Ascending aorta (tissue), 2 donors: ENCODE measurements at regions of chr1 and their contacts with region 1.

Region 1: DNA sequence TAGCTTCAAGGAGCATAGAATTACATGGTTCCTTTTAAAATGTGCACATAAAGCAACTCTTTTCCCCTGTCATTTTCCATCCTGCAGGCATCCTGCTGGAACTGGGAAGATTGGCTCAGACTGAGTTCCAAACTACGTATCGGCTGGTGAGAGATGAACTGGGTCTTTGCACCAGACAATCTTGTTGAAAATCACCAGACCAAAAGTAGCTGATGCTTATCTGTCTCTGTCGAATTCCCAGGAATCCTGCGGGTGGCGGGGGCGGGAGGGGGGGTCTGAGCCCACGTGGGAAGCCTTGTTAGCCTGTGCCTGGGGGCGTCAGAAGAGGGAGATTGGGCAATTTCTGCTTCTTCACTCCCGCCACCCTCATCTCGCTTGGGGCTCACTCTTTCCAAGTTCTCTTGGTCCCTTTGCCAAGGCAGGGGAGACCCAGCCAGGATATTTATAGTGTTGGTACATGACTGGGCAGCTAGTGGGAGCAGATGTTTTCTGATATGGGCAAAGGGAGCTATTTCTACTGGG is 90.1 kb upstream of the SLC25A33 start:
- DNase-seq: peak in 1 of 2 donors; percentile 92
- H3K4me3 ChIP-seq: peak overlapping the region in 1 of 2 donors; percentile 36
- H3K27ac ChIP-seq: peak overlapping the region; percentile 74 to 81
- H3K4me1 ChIP-seq: peaks cover 12 to 25% of the 10 kb centered on the region in 2 donors
- H3K27me3 ChIP-seq: no peaks in the 10 kb centered on the region
- CTCF ChIP-seq: no peak

Region 2: GRCh38 chr1:9399510-9400424 is 49.4 kb before region 1 on chr1:
- intact Hi-C with region 1: loop called (anchors 2 kb)
- DNase-seq: peak in 1 of 2 donors; percentile 82
- H3K4me3 ChIP-seq: no peak overlapping the region
- H3K27ac ChIP-seq: peak overlapping the region; percentile 87 to 93
- H3K4me1 ChIP-seq: peaks cover 34 to 55% of the 10 kb centered on the region in 2 donors
- H3K27me3 ChIP-seq: no peaks in the 10 kb centered on the region
- CTCF ChIP-seq: no peak

Region 3: GRCh38 chr1:9518454-9518998 is 69.4 kb after region 1 on chr1:
- intact Hi-C with region 1: no loop called
- DNase-seq: no peak
- H3K4me3 ChIP-seq: no peak overlapping the region
- H3K27ac ChIP-seq: no peak overlapping the region
- H3K4me1 ChIP-seq: no peaks in the 10 kb centered on the region
- H3K27me3 ChIP-seq: no peaks in the 10 kb centered on the region
- CTCF ChIP-seq: no peak